ENCODE measurements at regions of chr1 and their contacts with region 1.

Region 1: DNA sequence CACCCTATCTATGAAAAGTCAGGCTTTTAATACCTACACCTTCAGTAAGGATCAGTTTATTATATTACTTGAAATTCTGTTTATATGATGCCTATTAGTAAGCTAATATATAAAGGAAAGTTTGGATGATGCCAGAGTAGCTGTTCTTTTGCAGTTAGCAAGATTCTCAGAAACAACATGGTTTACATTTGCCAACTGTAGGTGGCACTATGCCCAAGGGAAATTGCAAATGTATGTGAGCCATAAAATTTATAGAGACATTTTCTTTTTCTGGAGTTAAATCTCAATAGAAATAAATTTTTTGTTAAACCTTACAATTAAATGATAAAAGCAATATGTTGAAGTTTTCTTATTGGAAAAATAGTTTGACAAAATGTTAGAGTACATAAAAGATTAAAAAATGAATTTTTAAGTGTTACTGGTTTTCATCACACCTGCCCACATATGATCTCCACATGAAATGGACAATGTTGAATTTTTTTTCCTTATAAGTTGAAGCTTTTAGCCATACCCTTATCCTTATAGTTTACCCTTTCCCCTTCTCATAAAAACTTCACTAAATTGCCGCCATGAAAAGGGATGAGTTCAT is 32.1 kb upstream of the EPHX4 start:
- DNase-seq: no peak
- H3K4me3 ChIP-seq: no peak overlapping the region
- H3K27ac ChIP-seq: no peak overlapping the region
- H3K4me1 ChIP-seq: no peaks in the 10 kb centered on the region
- H3K27me3 ChIP-seq: no peaks in the 10 kb centered on the region
- CTCF ChIP-seq: peak in 4 of 6 experiments; percentile 31 to 56 (median 34)
- POLR2A ChIP-seq: no peak

Region 2: DNA sequence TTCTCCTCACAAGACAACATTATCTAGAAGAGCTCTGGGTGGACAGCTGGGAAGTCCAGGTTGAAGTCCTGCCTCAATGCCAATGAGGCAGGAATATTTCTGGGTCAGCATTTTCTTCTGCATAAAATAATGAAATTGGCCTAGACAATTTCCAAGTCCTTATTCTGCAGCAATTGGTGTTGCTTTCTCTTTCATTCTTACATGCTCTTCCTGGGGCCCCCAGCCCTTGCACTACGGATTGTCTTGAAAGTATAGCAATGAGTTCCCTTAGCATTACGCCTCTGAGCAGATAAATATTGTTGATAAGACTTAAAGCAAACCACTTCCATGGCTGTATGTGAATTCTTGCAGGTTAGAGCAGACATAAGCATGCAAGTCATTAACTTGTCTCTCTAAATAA is 300.3 kb before region 1 on chr1:
- intact Hi-C with region 1: no loop called
- DNase-seq: no peak
- H3K4me3 ChIP-seq: no peak overlapping the region
- H3K27ac ChIP-seq: peak overlapping the region in 1 of 4 donors; percentile 38
- H3K4me1 ChIP-seq: peaks cover 0 to 43% (median 22%) of the 10 kb centered on the region in 3 donors
- H3K27me3 ChIP-seq: no peaks in the 10 kb centered on the region
- CTCF ChIP-seq: no peak
- POLR2A ChIP-seq: no peak

Region 3: GRCh38 chr1:92299477-92300150 is 301.9 kb after region 1 on chr1:
- intact Hi-C with region 1: loop called (anchors 10 kb)
- DNase-seq: no peak
- H3K4me3 ChIP-seq: peak overlapping the region; percentile 68 to 97 (median 88)
- H3K27ac ChIP-seq: peak overlapping the region; percentile 94 to 99 (median 96)
- H3K4me1 ChIP-seq: peaks cover 4 to 34% (median 7%) of the 10 kb centered on the region in 3 donors
- H3K27me3 ChIP-seq: no peaks in the 10 kb centered on the region
- CTCF ChIP-seq: no peak
- POLR2A ChIP-seq: no peak